ENCODE measurements at regions of chr17 and their contacts with region 1.

Region 1: DNA sequence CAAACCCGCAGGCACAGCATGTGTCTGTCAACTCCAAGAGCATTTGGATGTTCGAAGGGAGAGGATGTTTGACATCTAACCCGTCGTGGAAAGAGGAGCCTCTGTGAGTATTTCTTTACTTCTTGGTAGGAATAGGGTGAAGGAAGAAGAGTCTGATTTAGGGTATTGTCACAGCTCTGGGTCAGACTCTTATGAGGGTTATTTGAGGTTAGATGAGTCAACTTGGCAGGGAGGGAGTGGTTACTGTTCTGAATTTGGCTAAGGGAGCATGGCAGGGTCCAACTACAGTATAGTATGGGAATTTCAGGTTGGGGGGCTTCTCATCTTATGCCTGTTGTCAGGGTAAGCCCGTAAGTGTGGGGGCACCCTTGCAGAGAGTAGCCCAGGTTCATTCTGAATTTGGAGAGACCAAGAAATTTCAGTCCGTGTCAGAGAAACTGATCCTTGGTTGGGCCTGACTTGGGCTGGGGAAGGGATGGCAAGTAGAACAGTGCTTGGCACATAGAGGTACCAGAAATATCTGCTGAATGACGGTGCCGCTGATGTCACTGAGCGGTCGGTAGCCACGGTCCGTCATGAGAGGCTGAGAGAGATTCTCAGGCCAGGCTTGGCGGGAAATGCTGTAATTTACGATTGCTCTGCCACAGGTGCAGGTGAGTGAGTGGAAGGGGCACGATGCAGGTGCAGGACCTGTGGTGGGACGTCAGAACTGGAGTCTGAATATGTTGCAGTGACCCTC is 43.2 kb downstream of the MYH3 start:
- DNase-seq: no peak
- ATAC-seq: no peak
- H3K4me3 ChIP-seq: no peak overlapping the region
- H3K27ac ChIP-seq: no peak overlapping the region
- H3K4me1 ChIP-seq: no peaks in the 10 kb centered on the region
- H3K27me3 ChIP-seq: no peaks in the 10 kb centered on the region
- CTCF ChIP-seq: no peak

Region 2: GRCh38 chr17:10327640-10328039 is 286.3 kb before region 1 on chr17:
- intact Hi-C with region 1: loop called in 1 of 2 experiments (anchors 2 kb)
- DNase-seq: peak in 3 of 4 donors; percentile 44 to 76 (median 61)
- ATAC-seq: peak; percentile 97
- H3K4me3 ChIP-seq: no peak overlapping the region
- H3K27ac ChIP-seq: no peak overlapping the region
- H3K4me1 ChIP-seq: no peaks in the 10 kb centered on the region
- H3K27me3 ChIP-seq: no peaks in the 10 kb centered on the region
- CTCF ChIP-seq: peak; percentile 89 to 96

Region 3: GRCh38 chr17:10513299-10514067 is 100.5 kb before region 1 on chr17:
- intact Hi-C with region 1: no loop called
- DNase-seq: no peak
- ATAC-seq: no peak
- H3K4me3 ChIP-seq: no peak overlapping the region
- H3K27ac ChIP-seq: no peak overlapping the region
- H3K4me1 ChIP-seq: no peaks in the 10 kb centered on the region
- H3K27me3 ChIP-seq: peaks cover 0 to 5% of the 10 kb centered on the region in 2 donors
- CTCF ChIP-seq: no peak

Region 4: GRCh38 chr17:10683853-10684252 is 69.9 kb after region 1 on chr17:
- intact Hi-C with region 1: no loop called
- DNase-seq: no peak
- ATAC-seq: no peak
- H3K4me3 ChIP-seq: no peak overlapping the region
- H3K27ac ChIP-seq: no peak overlapping the region
- H3K4me1 ChIP-seq: no peaks in the 10 kb centered on the region
- H3K27me3 ChIP-seq: no peaks in the 10 kb centered on the region
- CTCF ChIP-seq: peak; percentile 15 to 27